ENCODE measurements at regions of chr4 and their contacts with region 1.

Region 1: DNA sequence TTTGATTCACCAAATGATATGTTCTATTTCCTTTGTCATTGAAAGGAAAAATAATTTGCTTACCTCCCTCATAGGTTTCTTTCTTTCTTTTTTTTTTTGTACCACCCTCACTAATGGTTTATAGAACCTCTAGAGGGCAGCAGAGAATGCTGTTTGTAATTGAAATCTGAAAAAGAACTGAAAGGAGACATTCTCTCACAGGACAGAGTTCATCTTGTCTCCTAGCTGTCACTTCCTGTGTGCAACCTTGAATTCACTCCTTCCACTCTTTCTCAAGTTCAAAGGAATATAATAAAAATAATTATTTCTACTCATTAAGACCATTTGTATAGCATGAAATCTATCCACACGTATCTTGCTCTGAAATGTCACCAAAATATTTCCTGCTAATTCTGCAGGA is 51.0 kb downstream of the GUCY1B1 start:
- DNase-seq: no peak
- ATAC-seq: peak; percentile 97
- H3K4me3 ChIP-seq: no peak overlapping the region
- H3K27ac ChIP-seq: no peak overlapping the region
- H3K4me1 ChIP-seq: no peaks in the 10 kb centered on the region
- H3K27me3 ChIP-seq: no peaks in the 10 kb centered on the region
- CTCF ChIP-seq: peak; percentile 77

Region 2: GRCh38 chr4:155953151-155954114 is 143.6 kb after region 1 on chr4 and contains the start of gene CTSO:
- intact Hi-C with region 1: loop called (anchors 10 kb)
- DNase-seq: peak; percentile 91
- ATAC-seq: peak; percentile 97
- H3K4me3 ChIP-seq: peak within 1 kb of the TSS; percentile 73
- H3K27ac ChIP-seq: peak within 1 kb of the TSS; percentile 99
- H3K4me1 ChIP-seq: peaks cover 9% of the 10 kb centered on the region
- H3K27me3 ChIP-seq: no peaks in the 10 kb centered on the region
- CTCF ChIP-seq: peak; percentile 72
- total RNA-seq, gene CTSO: 30.5 TPM

Measured in upper lobe of right lung (tissue), 1 donor.